PC-3 (cell line): ENCODE measurements at regions of chr6 and their contacts with region 1.

Region 1: GRCh38 chr6:64680451-64680862 is 1026.6 kb downstream of the EYS start:
- DNase-seq: peak; percentile 90
- ATAC-seq: peak; percentile 96
- H3K4me3 ChIP-seq: peak overlapping the region; percentile 36; the same call in 1 of the 2 replicates
- H3K27ac ChIP-seq: peak overlapping the region; percentile 97
- H3K4me1 ChIP-seq: peaks cover 34% of the 10 kb centered on the region
- H3K27me3 ChIP-seq: no peaks in the 10 kb centered on the region
- CTCF ChIP-seq: no peak

Region 2: GRCh38 chr6:64489763-64490162 is 190.7 kb before region 1 on chr6:
- CTCF ChIA-PET with region 1: no interaction called
- POLR2A ChIA-PET with region 1: no interaction called
- intact Hi-C with region 1: no loop called
- DNase-seq: no peak
- ATAC-seq: no peak
- H3K4me3 ChIP-seq: no peak overlapping the region
- H3K27ac ChIP-seq: no peak overlapping the region
- H3K4me1 ChIP-seq: no peaks in the 10 kb centered on the region
- H3K27me3 ChIP-seq: no peaks in the 10 kb centered on the region
- CTCF ChIP-seq: no peak

Region 3: GRCh38 chr6:64644024-64644423 is 36.4 kb before region 1 on chr6:
- CTCF ChIA-PET with region 1: no interaction called
- POLR2A ChIA-PET with region 1: no interaction called
- intact Hi-C with region 1: loop called (anchors 1 kb)
- DNase-seq: no peak
- ATAC-seq: no peak
- H3K4me3 ChIP-seq: no peak overlapping the region
- H3K27ac ChIP-seq: no peak overlapping the region
- H3K4me1 ChIP-seq: no peaks in the 10 kb centered on the region
- H3K27me3 ChIP-seq: no peaks in the 10 kb centered on the region
- CTCF ChIP-seq: no peak